ENCODE measurements at regions of chr10 and their contacts with region 1.

Region 1: DNA sequence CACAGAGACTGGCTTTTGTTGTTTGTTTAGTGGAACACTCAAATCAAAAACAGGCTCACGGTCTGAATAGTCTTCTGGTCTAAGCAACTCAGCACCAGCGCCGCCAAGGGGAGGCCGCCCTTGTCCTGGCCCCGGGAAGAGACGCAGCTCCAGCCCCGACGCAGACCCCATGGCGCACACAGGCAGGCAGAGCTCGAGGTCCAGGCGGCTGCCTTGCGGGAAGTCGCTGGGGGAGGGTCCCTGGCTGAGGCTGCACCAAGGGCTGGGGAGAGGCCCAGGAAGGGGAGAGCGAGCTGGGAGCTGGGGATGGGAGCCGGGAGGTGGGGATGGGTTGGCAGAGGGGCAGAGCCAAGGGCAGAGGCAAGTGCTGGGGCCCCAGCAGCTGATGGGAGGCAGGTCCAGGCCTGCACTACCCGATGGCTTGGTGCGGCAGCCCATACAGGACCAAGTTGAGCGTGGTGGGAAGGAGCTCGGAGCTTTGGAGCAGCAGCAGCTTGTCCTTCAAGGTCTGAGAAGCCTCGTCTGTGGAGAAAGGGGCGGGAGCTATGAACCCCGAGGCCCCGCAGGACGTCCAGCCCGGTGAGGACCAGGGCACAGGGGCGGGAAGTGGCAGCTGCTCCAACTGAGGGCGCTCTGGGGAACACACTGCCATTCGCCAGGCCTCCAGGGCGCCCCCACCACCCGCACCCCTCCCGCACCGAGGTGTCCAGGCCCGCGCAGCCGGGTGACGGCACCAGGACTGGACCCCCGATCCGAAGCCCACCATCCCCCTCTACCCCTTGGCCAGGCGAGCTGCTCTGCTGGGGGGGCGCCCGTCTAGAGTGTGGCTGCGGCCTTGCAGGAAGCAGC is 22.7 kb upstream of the NKX6-2 start:
- DNase-seq: no peak
- ATAC-seq: no peak
- H3K4me3 ChIP-seq: no peak overlapping the region
- H3K27ac ChIP-seq: no peak overlapping the region
- H3K4me1 ChIP-seq: no peaks in the 10 kb centered on the region
- CTCF ChIP-seq: no peak
- EP300 ChIP-seq: no peak
- POLR2A ChIP-seq: no peak
- RAD21 ChIP-seq: no peak

Region 2: GRCh38 chr10:132793871-132794849 is 14.4 kb before region 1 on chr10:
- CTCF ChIA-PET with region 1: interaction called, 16 read pairs
- POLR2A ChIA-PET with region 1: no interaction called
- DNase-seq: peak in 1 of 2 experiments; percentile 36
- ATAC-seq: peak; percentile 32 to 74; a peak in 4 of 6 replicates
- H3K4me3 ChIP-seq: no peak overlapping the region
- H3K27ac ChIP-seq: peak overlapping the region in 1 of 2 experiments; percentile 29; a peak in 2 of 6 replicates
- H3K4me1 ChIP-seq: peaks cover 5% of the 10 kb centered on the region; the same call in 1 of the 3 replicates
- CTCF ChIP-seq: peak; percentile 35; the same call in 2 of the 3 replicates
- EP300 ChIP-seq: no peak
- POLR2A ChIP-seq: no peak
- RAD21 ChIP-seq: peak in 1 of 2 experiments; percentile 26; a peak in 1 of 5 replicates

Measured in A549 (cell line).